Heart right ventricle (tissue), 16 donors: ENCODE measurements at regions of chr5 and their contacts with region 1.

Region 1: GRCh38 chr5:168219515-168220410 is 71.7 kb upstream of the WWC1 start:
- DNase-seq: peak in 1 of 2 donors; percentile 57
- ATAC-seq: peak in 7 of 8 donors; percentile 54 to 67 (median 63)
- H3K4me3 ChIP-seq: peak overlapping the region in 3 of 10 donors; percentile 17 to 21 (median 18)
- H3K27ac ChIP-seq: no peak overlapping the region
- H3K4me1 ChIP-seq: peaks cover 0 to 33% (median 12%) of the 10 kb centered on the region in 9 donors
- H3K27me3 ChIP-seq: no peaks in the 10 kb centered on the region
- CTCF ChIP-seq: peak; percentile 63 to 91 (median 88)

Region 2: DNA sequence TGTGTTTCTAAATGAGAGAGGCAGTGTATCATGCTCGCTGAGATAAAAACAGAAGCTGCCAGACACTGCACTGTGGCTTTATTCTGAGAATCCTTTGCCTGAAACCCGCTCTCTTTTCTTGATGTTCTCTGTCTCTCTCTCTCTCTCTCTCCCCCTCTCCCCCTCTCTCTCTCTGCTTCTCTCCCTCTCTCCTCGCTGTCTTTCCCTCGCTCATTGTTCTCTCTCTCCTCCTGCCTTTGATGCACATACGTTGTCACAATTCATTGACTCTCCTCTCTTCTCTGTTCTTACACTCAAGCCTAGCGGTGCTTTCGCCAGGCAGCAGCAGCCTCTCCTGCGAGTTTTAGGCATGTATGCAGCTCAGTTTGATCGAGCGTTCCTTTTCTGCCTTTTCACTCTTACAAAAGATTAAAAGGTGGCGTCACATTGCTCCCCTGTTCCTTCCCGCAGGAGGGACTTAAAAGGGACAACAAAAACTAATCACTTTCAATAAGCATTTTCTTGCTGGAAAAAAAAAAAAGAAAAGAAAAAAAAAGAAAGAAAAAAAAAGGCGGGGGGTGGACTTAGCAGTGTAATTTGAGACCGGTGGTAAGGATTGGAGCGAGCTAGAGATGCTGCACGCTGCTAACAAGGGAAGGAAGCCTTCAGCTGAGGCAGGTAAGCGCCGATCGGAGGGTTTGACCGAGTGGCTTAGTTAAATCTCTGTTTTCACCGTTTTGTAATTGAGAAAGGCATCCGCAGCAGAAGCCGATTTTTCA is 646.2 kb before region 1 on chr5:
- intact Hi-C with region 1: loop called in 3 of 10 experiments (anchors 10 kb)
- DNase-seq: no peak
- ATAC-seq: peak in 2 of 8 donors; percentile 27 to 31
- H3K4me3 ChIP-seq: peak overlapping the region in 8 of 10 donors; percentile 12 to 28 (median 24)
- H3K27ac ChIP-seq: no peak overlapping the region
- H3K4me1 ChIP-seq: peaks cover 0 to 13% (median 6%) of the 10 kb centered on the region in 9 donors
- H3K27me3 ChIP-seq: peaks cover 0 to 96% (median 67%) of the 10 kb centered on the region in 7 donors
- CTCF ChIP-seq: no peak

Region 3: DNA sequence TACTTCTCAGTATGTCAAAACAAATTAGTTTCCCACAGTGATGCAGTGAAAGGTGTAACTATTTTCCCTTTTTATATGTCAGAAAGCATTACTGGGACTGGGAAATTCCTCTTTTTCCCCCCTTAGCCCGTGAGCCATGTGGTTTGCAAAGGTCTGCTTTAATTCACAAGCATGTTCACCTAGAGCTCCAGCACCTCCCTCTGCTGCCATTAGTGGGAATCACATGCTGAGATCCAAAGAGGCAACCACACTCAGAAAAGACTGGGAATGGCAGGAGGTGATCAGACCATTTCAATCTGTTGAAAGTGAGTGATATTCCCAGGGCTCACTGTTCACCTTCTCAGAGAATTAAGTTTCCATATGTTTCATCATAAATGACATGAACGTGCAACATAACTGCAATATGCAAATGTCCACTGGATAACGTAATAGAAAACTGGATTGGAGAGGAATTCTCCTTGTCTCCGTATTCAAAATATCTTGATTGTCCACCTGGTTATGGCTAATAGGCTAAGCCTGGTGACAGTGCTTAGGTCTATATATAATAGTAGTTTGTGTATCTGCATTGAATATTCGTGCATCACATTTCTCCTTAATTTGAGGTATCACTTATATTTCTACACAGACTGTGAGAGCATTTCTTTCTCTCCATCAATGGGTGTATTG is 631.9 kb before region 1 on chr5:
- intact Hi-C with region 1: loop called in 2 of 10 experiments (anchors 5 to 10 kb)
- DNase-seq: peak in 1 of 2 donors; percentile 11
- ATAC-seq: peak in 1 of 8 donors; percentile 56
- H3K4me3 ChIP-seq: no peak overlapping the region
- H3K27ac ChIP-seq: no peak overlapping the region
- H3K4me1 ChIP-seq: peaks cover 0 to 2% (median 0%) of the 10 kb centered on the region in 9 donors
- H3K27me3 ChIP-seq: no peaks in the 10 kb centered on the region
- CTCF ChIP-seq: peak in 8 of 9 donors; percentile 10 to 58 (median 42)

Region 4: DNA sequence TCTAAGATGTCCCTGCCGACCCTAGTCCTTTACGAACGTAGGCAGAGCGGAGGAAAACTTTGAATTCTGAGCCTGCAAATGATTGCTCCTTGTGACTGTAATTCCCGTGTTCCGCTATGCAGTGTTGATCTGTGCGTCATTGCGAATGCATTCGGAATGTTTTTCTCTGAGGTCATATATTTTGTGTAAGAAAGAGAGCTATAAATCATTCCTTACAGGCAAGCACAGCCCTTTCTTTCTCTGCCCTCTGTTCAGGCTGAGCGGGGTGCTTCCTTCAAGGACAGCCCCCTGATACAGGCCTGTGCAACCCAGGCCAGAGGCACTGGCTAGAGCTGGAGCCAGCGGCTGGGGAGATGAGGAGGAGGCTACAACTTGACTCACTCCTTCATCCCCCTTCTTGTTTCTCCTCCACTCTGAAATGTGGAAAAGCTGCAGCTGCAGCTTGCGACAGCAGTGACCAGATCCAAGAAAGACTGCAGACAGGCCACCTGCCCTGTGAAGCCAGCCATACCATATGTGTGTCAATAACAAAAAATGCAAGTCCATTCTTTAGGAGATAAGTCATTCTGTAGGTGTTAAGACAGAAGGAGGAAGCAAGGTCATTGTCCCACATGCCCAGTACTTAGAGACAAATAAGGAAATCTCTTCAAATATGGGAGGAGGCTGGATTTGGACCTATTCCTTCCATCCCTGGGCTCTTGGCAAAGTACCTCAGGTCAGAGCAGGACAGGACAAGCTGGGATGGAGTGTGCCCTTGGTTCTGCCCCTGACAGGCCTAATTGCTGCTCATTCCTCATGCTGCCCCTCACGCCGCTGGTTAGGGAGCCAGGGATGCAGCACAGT is 274.0 kb before region 1 on chr5:
- intact Hi-C with region 1: loop called in 2 of 10 experiments (anchors 10 kb)
- DNase-seq: peak; percentile 44 to 53
- ATAC-seq: peak; percentile 69 to 87 (median 84)
- H3K4me3 ChIP-seq: no peak overlapping the region
- H3K27ac ChIP-seq: peak overlapping the region; percentile 57 to 92 (median 84)
- H3K4me1 ChIP-seq: peaks cover 8 to 86% (median 59%) of the 10 kb centered on the region in 9 donors
- H3K27me3 ChIP-seq: no peaks in the 10 kb centered on the region
- CTCF ChIP-seq: no peak

Region 5: GRCh38 chr5:168076561-168076991 is 143.2 kb before region 1 on chr5:
- intact Hi-C with region 1: no loop called
- DNase-seq: peak; percentile 28 to 35
- ATAC-seq: peak in 7 of 8 donors; percentile 42 to 94 (median 75)
- H3K4me3 ChIP-seq: no peak overlapping the region
- H3K27ac ChIP-seq: peak overlapping the region in 6 of 10 donors; percentile 20 to 49 (median 40)
- H3K4me1 ChIP-seq: peaks cover 0 to 35% (median 9%) of the 10 kb centered on the region in 9 donors
- H3K27me3 ChIP-seq: no peaks in the 10 kb centered on the region
- CTCF ChIP-seq: peak in 8 of 9 donors; percentile 6 to 59 (median 48)

Region 6: GRCh38 chr5:168123631-168124528 is 95.9 kb before region 1 on chr5:
- intact Hi-C with region 1: loop called in 6 of 10 experiments (anchors 5 to 10 kb)
- DNase-seq: no peak
- ATAC-seq: peak in 2 of 8 donors; percentile 28 to 40
- H3K4me3 ChIP-seq: no peak overlapping the region
- H3K27ac ChIP-seq: peak overlapping the region in 5 of 10 donors; percentile 11 to 44 (median 25)
- H3K4me1 ChIP-seq: peaks cover 7 to 48% (median 19%) of the 10 kb centered on the region in 9 donors
- H3K27me3 ChIP-seq: no peaks in the 10 kb centered on the region
- CTCF ChIP-seq: no peak